ENCODE measurements at regions of chr9 and their contacts with region 1.

Region 1: GRCh38 chr9:33623658-33624586 is 99.9 kb downstream of the ANKRD18B start:
- DNase-seq: peak; percentile 54
- ATAC-seq: peak; percentile 81

Region 2: GRCh38 chr9:33290247-33291030 is 333.5 kb before region 1 on chr9 and contains the start of gene NFX1:
- intact Hi-C with region 1: no loop called
- DNase-seq: peak; percentile 99
- ATAC-seq: peak; percentile 94
- total RNA-seq, gene NFX1: 26.2 TPM

Region 3: DNA sequence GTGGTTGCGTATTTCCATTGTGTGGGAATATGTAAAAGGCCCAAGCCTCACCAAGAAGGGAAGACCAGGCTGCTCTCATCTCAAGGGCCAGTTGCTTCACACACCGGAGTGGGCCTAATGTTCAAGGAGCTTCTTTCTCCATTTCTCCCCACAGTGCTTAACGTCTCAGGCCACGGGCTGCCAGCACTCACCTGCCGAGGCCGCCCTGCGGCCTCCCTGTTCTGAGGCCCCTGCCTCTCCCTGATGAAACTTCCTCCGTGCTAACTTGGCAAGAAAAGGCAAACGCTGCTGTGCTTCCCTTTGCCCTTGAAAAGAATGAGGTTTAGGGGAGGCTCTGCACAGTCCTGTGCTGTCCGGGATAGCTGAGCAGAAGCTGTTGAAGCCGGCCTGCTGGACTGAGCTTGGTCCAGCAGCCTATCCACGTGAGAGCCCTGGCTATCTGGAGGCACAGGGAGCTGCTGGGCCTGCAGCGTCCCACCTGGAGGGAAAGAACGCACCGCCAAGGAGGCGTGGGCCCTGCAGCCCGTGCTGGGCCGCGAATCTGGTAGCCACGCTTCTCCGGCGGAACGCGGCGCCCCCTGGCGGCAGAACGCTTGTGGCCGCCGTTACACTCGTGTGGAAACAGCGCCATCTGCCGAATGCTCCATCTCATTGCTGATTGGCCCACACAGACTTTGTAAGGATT is 97.9 kb after region 1 on chr9:
- intact Hi-C with region 1: loop called (anchors 2 kb)
- DNase-seq: peak; percentile 92
- ATAC-seq: peak; percentile 90